ENCODE measurements at regions of chr15 and their contacts with region 1.

Region 1: GRCh38 chr15:80776420-80777045 is 2.6 kb upstream of the CEMIP start:
- DNase-seq: peak; percentile 71
- ATAC-seq: peak; percentile 45
- H3K4me3 Mint-ChIP-seq: no peak overlapping the region
- H3K27ac Mint-ChIP-seq: no peak overlapping the region
- H3K4me1 Mint-ChIP-seq: peaks cover 8% of the 10 kb centered on the region
- H3K27me3 Mint-ChIP-seq: peaks cover 39% of the 10 kb centered on the region

Region 2: DNA sequence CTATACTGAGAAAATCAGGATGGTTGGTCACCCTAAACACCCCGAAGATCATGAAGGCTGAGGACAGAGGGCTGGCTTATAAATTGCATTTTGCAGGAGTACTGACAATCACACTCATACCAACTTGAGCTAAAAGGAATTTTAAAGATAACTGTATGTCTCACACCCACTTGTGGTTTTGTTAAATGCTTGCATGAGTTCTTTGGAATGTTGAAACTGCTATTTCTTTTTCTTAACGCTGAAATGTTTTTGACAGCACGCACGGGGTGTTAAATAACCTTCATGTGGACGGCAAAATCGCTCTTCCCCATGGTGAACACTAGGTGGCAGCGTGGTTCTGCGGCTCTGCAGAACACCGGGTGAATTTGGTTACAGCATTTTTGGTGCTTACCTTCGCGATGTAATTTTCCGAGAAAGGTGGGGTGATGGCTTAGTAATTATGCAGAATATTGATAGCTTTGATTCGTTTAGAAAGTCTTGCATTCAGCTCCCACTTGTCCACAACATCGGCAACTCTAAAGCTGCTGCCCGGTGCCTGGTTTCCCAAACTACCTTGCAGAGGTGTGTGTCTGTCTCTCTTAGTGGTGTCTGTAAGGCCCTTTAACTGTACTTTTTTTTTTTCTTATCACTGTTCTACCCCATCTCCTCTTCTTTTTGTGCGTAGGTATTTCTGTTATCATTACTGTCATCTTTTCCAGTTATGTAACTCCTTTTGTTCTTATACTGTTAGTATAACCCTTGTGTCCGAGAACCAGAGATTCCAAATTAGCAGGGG is 320.7 kb before region 1 on chr15:
- CTCF ChIA-PET with region 1: interaction called, 51 read pairs
- POLR2A ChIA-PET with region 1: no interaction called
- DNase-seq: peak; percentile 69
- ATAC-seq: peak; percentile 74
- H3K4me3 Mint-ChIP-seq: no peak overlapping the region
- H3K27ac Mint-ChIP-seq: no peak overlapping the region
- H3K4me1 Mint-ChIP-seq: peaks cover 2% of the 10 kb centered on the region
- H3K27me3 Mint-ChIP-seq: peaks cover 10% of the 10 kb centered on the region

Region 3: GRCh38 chr15:80619680-80620079 is 156.9 kb before region 1 on chr15:
- CTCF ChIA-PET with region 1: interaction called, 24 read pairs
- POLR2A ChIA-PET with region 1: no interaction called
- DNase-seq: no peak
- ATAC-seq: no peak
- H3K4me3 Mint-ChIP-seq: no peak overlapping the region
- H3K27ac Mint-ChIP-seq: no peak overlapping the region
- H3K4me1 Mint-ChIP-seq: no peaks in the 10 kb centered on the region
- H3K27me3 Mint-ChIP-seq: peaks cover 18% of the 10 kb centered on the region

Region 4: GRCh38 chr15:80643431-80643951 is 133.0 kb before region 1 on chr15:
- CTCF ChIA-PET with region 1: no interaction called
- POLR2A ChIA-PET with region 1: no interaction called
- DNase-seq: no peak
- ATAC-seq: no peak
- H3K4me3 Mint-ChIP-seq: no peak overlapping the region
- H3K27ac Mint-ChIP-seq: no peak overlapping the region
- H3K4me1 Mint-ChIP-seq: peaks cover 6% of the 10 kb centered on the region
- H3K27me3 Mint-ChIP-seq: peaks cover 2% of the 10 kb centered on the region

Region 5: DNA sequence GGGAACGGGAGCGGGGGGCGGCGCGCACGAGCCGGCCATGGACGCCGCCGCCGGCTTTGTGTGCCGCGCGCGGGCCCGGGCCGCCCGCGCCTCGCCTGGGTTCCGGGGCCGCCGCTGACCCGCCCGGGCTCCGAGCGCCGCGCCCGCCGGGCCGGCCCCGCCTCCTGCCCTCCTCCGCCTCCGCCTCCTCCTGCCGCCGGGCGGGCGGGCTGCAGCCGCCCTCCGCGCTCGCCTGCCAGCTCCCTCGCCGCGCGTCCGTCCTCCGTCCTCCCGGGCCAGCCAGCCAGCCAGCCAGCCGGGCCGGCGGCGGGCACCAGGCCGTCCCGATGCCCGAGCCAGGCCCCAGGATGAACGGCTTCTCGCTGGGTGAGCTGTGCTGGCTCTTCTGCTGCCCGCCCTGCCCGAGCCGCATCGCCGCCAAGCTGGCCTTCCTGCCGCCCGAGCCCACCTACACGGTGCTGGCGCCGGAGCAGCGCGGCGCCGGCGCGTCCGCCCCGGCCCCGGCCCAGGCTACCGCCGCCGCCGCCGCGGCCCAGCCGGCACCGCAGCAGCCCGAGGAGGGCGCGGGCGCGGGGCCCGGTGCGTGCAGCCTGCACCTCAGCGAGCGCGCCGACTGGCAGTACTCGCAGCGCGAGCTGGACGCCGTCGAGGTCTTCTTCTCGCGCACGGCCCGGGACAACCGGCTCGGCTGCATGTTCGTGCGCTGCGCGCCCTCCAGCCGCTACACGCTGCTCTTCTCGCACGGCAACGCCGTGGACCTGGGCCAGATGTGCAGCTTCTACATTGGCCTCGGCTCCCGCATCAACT is 81.2 kb before region 1 on chr15 and contains the start of gene ABHD17C:
- CTCF ChIA-PET with region 1: interaction called, 14 read pairs
- POLR2A ChIA-PET with region 1: interaction called, 3 read pairs
- DNase-seq: peak; percentile 51
- ATAC-seq: peak; percentile 87
- H3K4me3 Mint-ChIP-seq: peak within 1 kb of the TSS; percentile 79
- H3K27ac Mint-ChIP-seq: peak within 1 kb of the TSS; percentile 62
- H3K4me1 Mint-ChIP-seq: peaks cover 15% of the 10 kb centered on the region
- H3K27me3 Mint-ChIP-seq: peaks cover 48% of the 10 kb centered on the region
- total RNA-seq, gene ABHD17C: 1.4 to 2.1 TPM

Region 6: GRCh38 chr15:80766275-80766674 is 10.3 kb before region 1 on chr15:
- CTCF ChIA-PET with region 1: interaction called, 13 read pairs
- POLR2A ChIA-PET with region 1: no interaction called
- DNase-seq: no peak
- ATAC-seq: no peak
- H3K4me3 Mint-ChIP-seq: no peak overlapping the region
- H3K27ac Mint-ChIP-seq: no peak overlapping the region
- H3K4me1 Mint-ChIP-seq: no peaks in the 10 kb centered on the region
- H3K27me3 Mint-ChIP-seq: peaks cover 2% of the 10 kb centered on the region

Region 7: DNA sequence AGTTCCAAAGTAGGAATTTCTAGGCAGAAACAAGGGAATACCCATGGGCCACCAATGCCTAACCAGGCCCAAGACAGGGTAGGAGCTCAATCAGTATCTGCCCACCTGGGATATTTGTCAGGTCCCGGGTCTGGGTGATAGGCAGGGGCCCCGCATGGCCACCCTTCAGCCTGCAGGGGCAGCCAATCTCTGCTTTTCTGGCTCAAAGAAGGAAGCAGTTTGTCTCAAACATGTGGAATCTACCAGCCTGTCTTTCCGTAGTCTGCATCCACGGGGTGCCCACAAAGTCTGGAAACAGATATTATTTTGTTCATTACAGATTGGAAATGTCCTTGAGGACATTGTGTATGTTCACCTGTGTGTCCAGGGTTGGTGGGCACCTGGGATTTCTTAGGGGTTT is 58.8 kb after region 1 on chr15:
- CTCF ChIA-PET with region 1: no interaction called
- POLR2A ChIA-PET with region 1: no interaction called
- DNase-seq: no peak
- ATAC-seq: no peak
- H3K4me3 Mint-ChIP-seq: no peak overlapping the region
- H3K27ac Mint-ChIP-seq: no peak overlapping the region
- H3K4me1 Mint-ChIP-seq: no peaks in the 10 kb centered on the region
- H3K27me3 Mint-ChIP-seq: peaks cover 15% of the 10 kb centered on the region

Region 8: GRCh38 chr15:80970018-80970658 is 193.6 kb after region 1 on chr15:
- CTCF ChIA-PET with region 1: interaction called, 34 read pairs
- POLR2A ChIA-PET with region 1: no interaction called
- DNase-seq: peak; percentile 73
- ATAC-seq: no peak
- H3K4me3 Mint-ChIP-seq: no peak overlapping the region
- H3K27ac Mint-ChIP-seq: no peak overlapping the region
- H3K4me1 Mint-ChIP-seq: peaks cover 7% of the 10 kb centered on the region
- H3K27me3 Mint-ChIP-seq: no peaks in the 10 kb centered on the region